Adrenal gland (tissue), 19 donors: ENCODE measurements at regions of chr6 and their contacts with region 1.

Region 1: DNA sequence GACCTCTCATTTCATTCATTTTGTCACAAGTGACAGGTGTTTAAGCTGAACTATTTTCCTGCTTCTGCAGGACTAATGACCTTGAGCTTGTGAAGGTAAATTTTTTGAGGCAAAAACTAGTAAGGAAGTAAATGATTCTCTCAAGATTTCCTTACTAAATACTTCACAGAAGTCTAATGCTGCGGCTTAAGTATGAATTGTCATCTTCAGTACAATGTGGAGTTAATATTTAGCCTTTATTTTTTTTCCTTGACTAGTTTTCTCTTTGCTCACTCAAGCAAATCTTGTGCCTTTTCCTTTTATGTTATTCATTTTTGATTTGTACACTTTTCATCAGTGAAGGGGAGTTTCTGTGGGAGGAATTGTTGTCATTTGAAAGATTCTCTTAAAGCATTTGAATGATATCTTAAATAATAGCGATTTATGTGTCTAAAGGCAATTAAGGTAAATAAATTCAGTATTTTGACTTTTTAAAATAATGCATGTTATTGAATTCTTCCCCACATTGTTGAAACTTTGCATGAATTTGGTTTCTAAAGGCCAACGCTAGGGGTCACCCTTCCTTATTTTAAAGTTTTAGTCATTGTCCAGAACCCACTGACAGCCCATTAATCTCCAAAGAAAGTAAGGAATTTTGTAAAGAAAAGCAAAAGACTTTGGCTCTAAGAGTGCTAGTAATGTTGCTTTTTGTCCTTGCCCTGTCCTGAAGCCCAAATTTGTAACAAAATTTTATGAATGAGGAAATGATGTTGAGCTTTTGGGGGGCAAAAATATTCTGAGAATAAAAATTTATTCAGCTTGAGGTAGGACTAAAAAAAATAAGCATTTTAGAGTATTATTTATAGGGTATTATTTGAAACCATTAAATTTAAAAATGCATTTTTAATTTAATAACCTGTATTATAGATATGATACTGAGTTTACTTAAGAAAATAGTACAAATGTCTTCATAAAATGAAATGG is 157.4 kb upstream of the LAMA2 start:
- DNase-seq: peak in 3 of 7 donors; percentile 26 to 33 (median 26)
- H3K4me3 ChIP-seq: no peak overlapping the region
- H3K27ac ChIP-seq: no peak overlapping the region
- H3K4me1 ChIP-seq: no peaks in the 10 kb centered on the region
- H3K27me3 ChIP-seq: no peaks in the 10 kb centered on the region
- CTCF ChIP-seq: peak; percentile 29 to 57 (median 44)
- POLR2A ChIP-seq: no peak

Region 2: DNA sequence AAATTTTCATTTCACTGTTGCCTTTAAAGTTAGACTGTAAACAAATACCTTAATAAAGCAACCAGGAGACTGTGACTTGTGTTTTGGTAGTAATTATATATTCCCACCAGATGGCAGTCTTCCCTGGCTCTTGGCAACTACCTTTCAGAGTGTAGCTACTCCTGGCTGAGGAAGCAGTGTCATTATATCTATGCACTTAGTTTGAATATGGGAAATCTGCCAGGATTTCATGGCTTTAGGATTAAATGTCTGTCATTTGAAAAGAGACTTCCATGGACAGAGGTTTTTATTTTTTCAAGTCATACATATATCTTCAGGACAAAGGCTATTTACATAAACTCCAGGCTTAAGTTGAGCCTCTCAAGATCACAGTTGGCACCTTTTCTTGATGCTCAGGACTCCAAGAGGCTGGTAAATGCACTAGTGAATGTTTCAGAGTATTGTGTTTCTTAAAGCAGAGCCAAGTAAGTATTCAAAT is 988.5 kb before region 1 on chr6:
- intact Hi-C with region 1: loop called in 1 of 2 experiments (anchors 5 kb)
- DNase-seq: peak; percentile 15 to 55 (median 25)
- H3K4me3 ChIP-seq: no peak overlapping the region
- H3K27ac ChIP-seq: no peak overlapping the region
- H3K4me1 ChIP-seq: no peaks in the 10 kb centered on the region
- H3K27me3 ChIP-seq: no peaks in the 10 kb centered on the region
- CTCF ChIP-seq: peak; percentile 51 to 70 (median 62)
- POLR2A ChIP-seq: no peak

Region 3: DNA sequence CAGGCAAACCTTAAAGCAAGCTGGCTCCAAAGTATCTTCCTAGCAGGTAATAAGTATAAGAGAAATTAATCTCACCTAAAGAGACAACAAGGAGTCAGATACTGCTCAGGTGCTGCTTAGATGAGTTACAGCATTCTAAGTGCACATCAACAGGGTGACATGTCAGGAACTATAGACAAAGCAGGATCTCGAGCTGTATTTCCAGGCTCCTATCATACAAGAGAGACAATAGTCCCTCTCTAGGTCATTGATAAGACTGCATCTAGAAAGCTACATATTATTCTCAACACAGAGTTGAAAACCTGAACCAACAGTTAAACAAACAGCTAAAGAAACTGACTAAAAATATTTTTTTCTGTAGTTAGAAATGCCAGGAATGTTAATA is 209.0 kb before region 1 on chr6:
- intact Hi-C with region 1: no loop called
- DNase-seq: no peak
- H3K4me3 ChIP-seq: no peak overlapping the region
- H3K27ac ChIP-seq: no peak overlapping the region
- H3K4me1 ChIP-seq: peaks cover 0 to 5% of the 10 kb centered on the region in 2 donors
- H3K27me3 ChIP-seq: no peaks in the 10 kb centered on the region
- CTCF ChIP-seq: peak in 2 of 6 experiments; percentile 10 to 29
- POLR2A ChIP-seq: no peak

Region 4: GRCh38 chr6:128767705-128768104 is 42.2 kb after region 1 on chr6:
- intact Hi-C with region 1: no loop called
- DNase-seq: no peak
- H3K4me3 ChIP-seq: no peak overlapping the region
- H3K27ac ChIP-seq: no peak overlapping the region
- H3K4me1 ChIP-seq: no peaks in the 10 kb centered on the region
- H3K27me3 ChIP-seq: no peaks in the 10 kb centered on the region
- CTCF ChIP-seq: no peak
- POLR2A ChIP-seq: no peak

Region 5: DNA sequence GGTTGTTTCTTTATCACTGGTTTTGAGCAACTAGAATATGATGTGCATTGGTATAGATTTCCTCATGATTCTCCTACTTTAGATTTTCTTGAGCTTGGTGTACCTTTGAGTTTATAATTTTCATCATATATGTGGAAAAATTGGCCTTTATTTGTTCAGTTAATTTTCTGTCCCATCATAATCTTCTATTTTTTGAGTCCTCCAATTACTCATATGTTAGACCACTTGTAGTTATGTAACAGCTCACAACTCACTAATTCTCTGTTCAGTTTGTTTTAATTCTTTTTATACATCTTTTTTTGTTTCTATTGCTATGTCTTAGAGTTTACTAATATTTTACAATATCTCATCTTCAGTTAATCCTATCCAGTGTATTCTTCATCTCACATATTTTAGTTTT is 76.1 kb after region 1 on chr6:
- intact Hi-C with region 1: no loop called
- DNase-seq: no peak
- H3K4me3 ChIP-seq: no peak overlapping the region
- H3K27ac ChIP-seq: no peak overlapping the region
- H3K4me1 ChIP-seq: no peaks in the 10 kb centered on the region
- H3K27me3 ChIP-seq: no peaks in the 10 kb centered on the region
- CTCF ChIP-seq: no peak
- POLR2A ChIP-seq: no peak

Region 6: GRCh38 chr6:129251669-129252376 is 526.3 kb after region 1 on chr6:
- intact Hi-C with region 1: loop called in 1 of 2 experiments (anchors 10 kb)
- DNase-seq: peak; percentile 29 to 71 (median 44)
- H3K4me3 ChIP-seq: no peak overlapping the region
- H3K27ac ChIP-seq: no peak overlapping the region
- H3K4me1 ChIP-seq: no peaks in the 10 kb centered on the region
- H3K27me3 ChIP-seq: peaks cover 5% of the 10 kb centered on the region
- CTCF ChIP-seq: peak; percentile 56 to 80 (median 67)
- POLR2A ChIP-seq: no peak